OCI-LY7 (cell line): ENCODE measurements at regions of chr2 and their contacts with region 1.

Region 1: DNA sequence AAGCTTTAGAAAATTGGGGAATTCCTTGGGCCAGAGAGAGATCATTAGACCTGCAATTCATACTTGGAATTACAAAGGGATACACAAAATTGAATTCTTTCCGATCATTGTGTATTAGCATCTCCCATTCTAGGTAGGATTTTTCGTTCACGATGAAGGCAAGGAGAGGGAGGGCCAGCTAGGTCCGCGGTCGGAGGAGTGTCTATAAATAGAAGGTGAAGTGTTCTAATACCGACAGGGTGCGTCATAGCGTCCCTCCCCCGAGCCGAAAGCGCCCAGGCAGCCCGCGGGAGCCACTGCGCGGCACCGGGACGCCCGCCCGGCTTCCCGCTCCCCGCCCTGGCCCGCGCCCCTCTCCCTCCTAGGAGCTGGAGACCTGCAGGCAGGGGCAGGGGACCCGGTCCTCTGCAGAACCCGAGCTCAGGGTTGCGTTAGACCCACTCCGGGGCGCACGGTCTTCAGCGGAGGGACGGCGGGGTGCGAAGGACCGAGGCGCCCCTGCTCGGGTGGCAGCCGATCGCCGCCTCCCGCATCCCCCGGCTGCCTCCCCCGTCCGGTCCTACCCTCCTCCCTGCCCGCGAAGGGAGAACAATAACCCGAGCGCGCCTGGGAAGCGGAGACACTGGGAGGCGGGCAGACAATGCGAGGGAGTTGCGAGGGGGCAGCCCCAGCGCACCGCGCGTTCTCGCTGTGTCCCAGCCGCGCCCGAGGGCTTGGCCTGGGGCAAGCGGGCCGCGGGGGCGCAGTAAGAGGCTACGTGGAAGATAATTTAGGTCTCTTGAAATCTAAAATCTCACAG is 114.2 kb upstream of the SERTAD2 start:
- DNase-seq: peak; percentile 78
- H3K4me3 ChIP-seq: peak overlapping the region; percentile 69
- H3K27ac ChIP-seq: peak overlapping the region; percentile 16
- H3K4me1 ChIP-seq: peaks cover 34% of the 10 kb centered on the region
- CTCF ChIP-seq: peak; percentile 40; the same call in 1 of the 2 replicates

Region 2: DNA sequence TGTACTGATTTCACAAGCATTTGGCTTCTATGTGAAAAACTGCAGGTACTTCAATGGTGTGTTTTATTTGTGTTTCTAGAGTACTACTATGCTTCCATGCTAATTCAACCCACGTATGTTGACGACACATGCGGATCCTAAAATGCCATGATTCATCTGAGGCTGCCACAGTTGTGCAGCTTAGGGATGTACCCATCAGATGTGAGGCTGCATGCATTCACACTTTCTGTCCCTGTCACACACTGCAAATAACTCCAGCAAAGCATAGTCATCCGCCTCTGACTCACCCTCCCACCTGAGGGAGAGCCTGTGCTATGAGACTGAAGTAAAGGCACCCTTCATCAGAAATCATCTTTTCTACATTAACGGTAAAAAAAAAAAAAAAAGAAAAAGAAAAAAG is 92.0 kb before region 1 on chr2:
- CTCF ChIA-PET with region 1: no interaction called
- POLR2A ChIA-PET with region 1: no interaction called
- intact Hi-C with region 1: no loop called
- DNase-seq: no peak
- H3K4me3 ChIP-seq: no peak overlapping the region
- H3K27ac ChIP-seq: no peak overlapping the region
- H3K4me1 ChIP-seq: peaks cover 9% of the 10 kb centered on the region
- CTCF ChIP-seq: no peak

Region 3: DNA sequence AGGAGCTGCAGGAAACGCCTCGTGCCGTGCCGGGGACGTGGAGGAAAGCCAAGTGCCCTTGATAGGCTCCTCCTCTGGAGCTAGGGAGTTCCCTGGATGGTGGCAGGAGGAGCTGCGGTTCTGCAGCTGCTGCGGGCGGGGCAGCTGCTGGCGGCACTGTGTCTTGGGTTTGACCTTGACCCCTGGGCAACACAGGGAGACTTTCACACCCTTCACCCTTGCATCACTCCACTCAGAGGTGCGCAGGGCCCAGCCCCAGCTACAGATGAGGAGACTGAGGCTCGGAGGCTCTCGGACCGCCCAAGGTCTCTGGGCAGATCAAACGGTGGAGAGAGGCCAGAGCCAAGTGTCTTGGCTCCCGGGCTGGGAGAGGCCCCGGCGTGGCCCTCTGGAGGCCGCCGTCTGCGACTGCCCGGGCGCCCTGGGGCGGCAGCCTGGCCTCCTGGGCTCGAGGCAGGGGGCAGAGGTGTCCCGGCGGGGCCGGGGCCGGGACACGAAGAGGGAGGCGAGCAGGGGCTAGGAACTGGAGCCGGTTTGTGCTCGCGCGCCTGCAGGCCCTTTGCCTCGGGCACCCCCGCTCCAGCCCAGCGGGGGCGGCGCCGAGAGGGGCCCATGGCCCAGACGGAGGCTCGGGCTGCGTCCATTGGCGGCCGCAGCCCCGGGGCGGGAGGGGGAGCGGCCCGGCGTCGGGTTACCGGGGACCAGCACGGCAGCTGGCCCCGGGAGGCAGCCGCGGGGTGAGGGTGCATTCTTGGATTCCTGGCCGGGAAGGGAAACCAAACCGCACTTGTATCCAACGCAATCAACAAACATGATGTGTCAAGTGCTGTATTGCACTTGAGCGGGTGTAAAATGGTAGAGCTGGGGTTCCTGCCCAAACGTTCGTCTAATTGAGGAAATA is 91.7 kb after region 1 on chr2:
- CTCF ChIA-PET with region 1: no interaction called
- POLR2A ChIA-PET with region 1: interaction called, 3 read pairs
- intact Hi-C with region 1: loop called (anchors 5 kb)
- DNase-seq: no peak
- H3K4me3 ChIP-seq: peak overlapping the region; percentile 17
- H3K27ac ChIP-seq: peak overlapping the region; percentile 12
- H3K4me1 ChIP-seq: peaks cover 66% of the 10 kb centered on the region
- CTCF ChIP-seq: no peak